Activated B cell treated with CpG ODN at 0.5 μM for 24 hours (primary cell): ENCODE measurements at regions of chr12 and their contacts with region 1.

Region 1: GRCh38 chr12:116855744-116856470 is 25.3 kb downstream of the HRK start:
- DNase-seq: no peak
- ATAC-seq: no peak
- H3K4me3 Mint-ChIP-seq: no peak overlapping the region
- H3K27ac Mint-ChIP-seq: no peak overlapping the region
- H3K4me1 Mint-ChIP-seq: peaks cover 52% of the 10 kb centered on the region
- H3K27me3 Mint-ChIP-seq: no peaks in the 10 kb centered on the region
- CTCF ChIP-seq: no peak

Region 2: GRCh38 chr12:116803013-116803736 is 52.7 kb before region 1 on chr12:
- CTCF ChIA-PET with region 1: no interaction called
- POLR2A ChIA-PET with region 1: no interaction called
- intact Hi-C with region 1: loop called (anchors 5 kb)
- DNase-seq: no peak
- ATAC-seq: peak; percentile 81
- H3K4me3 Mint-ChIP-seq: peak overlapping the region; percentile 21
- H3K27ac Mint-ChIP-seq: peak overlapping the region; percentile 79
- H3K4me1 Mint-ChIP-seq: peaks cover 56% of the 10 kb centered on the region
- H3K27me3 Mint-ChIP-seq: no peaks in the 10 kb centered on the region
- CTCF ChIP-seq: no peak